ENCODE measurements at regions of chr18 and their contacts with region 1.

Region 1: DNA sequence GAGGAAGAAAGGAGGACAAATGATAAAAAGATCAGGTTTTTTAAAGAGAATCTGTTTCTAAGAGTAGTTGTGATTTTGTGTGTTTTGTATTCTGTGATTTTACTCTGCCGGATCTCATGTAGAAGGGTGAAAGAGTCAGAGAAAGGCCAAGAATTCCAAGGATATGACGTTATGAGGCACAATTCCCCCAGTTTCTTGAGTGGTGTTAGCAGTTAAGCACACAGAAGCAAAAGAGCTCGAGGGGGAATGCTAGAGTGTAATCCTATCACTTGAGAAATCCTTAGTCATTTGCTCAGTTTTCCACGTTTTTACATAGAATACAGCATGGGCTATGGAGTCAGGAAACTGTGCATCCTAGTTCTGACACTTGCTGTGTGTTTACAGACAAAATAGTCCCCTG is 34.8 kb downstream of the METTL4 start:
- DNase-seq: no peak
- H3K4me3 ChIP-seq: no peak overlapping the region
- H3K27ac ChIP-seq: no peak overlapping the region
- H3K4me1 ChIP-seq: no peaks in the 10 kb centered on the region
- H3K27me3 ChIP-seq: no peaks in the 10 kb centered on the region
- CTCF ChIP-seq: no peak
- POLR2A ChIP-seq: no peak

Region 2: DNA sequence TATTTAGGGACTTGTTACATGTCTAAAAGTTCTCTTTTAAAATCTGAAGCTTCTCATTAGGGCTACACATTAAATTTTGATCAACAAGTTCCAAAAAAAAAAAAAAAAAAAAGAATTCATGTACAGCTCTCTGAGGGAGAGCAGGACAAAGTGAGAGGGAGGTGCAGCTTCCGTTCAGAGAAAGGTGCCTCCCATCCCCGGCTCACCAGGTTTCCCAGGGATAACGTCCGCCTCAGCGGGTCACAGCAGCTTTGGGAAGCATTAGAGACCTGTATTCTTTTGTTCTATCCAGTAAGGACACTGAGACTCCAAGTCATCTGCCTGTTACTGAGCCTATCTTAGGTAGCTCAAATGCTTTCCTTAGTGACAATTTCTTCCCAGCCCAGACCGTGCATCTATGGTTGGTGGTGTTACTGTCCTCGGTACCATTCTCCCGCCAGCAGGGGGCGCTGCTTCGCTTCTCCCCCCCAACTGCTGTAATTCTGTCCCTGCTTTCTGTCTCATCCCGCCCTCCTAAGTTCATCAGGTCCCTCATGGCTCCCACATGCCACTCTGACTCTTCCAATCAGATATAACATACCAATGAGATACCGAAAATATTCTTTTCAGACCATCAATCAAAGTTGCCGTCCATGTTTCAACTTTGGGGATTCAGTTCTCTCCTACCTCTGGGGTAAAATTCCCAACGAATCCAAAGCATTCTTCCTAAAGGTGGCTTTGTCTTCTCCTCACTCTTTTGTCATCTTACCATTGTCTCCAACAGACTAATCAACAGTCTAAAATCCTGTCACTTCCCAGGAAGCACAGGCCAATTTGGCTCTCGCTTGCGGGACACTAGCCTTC is 431.7 kb before region 1 on chr18:
- intact Hi-C with region 1: loop called (anchors 10 kb)
- DNase-seq: peak; percentile 23 to 64 (median 59)
- H3K4me3 ChIP-seq: no peak overlapping the region
- H3K27ac ChIP-seq: no peak overlapping the region
- H3K4me1 ChIP-seq: no peaks in the 10 kb centered on the region
- H3K27me3 ChIP-seq: no peaks in the 10 kb centered on the region
- CTCF ChIP-seq: peak; percentile 38 to 66 (median 56)
- POLR2A ChIP-seq: no peak